Activated B cell treated with CpG ODN at 0.5 μM for 24 hours (primary cell): ENCODE measurements at regions of chr4 and their contacts with region 1.

Region 1: DNA sequence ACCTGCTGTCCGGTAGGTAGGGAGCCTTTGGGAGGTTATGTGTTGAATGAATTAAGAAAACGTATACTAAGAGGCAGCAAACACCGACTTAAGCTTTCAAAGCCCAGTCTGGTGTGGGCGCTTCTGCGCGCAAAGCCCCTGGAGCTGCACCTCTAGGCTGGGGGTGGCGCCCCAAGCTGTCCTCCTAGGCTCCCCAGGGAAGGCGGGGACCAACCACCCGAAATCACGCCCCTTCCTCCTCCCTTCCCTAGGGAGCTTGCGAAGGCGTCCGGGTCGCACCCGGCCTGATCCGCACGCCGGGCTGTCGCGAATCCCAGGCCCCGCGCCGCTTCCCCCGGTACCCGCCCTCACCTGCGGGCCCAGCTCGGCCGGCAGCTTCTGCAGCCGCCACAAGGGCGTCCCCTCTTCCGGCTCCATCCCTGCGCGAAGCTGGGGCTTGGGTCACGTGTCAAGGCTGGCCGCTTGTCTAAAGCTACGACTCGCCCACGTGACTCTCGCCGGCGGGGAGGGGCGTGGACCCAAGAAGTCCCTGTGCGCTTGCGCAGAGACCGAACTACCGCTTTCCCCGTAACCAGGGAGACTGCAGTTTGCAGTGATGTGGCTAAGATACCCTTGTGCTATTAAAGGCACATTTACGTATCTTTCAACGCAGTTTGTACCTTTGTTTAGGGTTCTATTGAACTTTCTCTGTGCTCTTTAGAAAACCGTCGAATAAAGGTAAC is at the start of gene COMMD8:
- DNase-seq: peak; percentile 94
- ATAC-seq: peak; percentile 79
- H3K4me3 Mint-ChIP-seq: peak within 1 kb of the TSS; percentile 90
- H3K27ac Mint-ChIP-seq: peak within 1 kb of the TSS; percentile 92
- H3K4me1 Mint-ChIP-seq: peaks cover 57% of the 10 kb centered on the region
- H3K27me3 Mint-ChIP-seq: no peaks in the 10 kb centered on the region
- CTCF ChIP-seq: no peak
- total RNA-seq, gene COMMD8: 23.6 and 23.9 TPM in 2 replicates

Region 2: DNA sequence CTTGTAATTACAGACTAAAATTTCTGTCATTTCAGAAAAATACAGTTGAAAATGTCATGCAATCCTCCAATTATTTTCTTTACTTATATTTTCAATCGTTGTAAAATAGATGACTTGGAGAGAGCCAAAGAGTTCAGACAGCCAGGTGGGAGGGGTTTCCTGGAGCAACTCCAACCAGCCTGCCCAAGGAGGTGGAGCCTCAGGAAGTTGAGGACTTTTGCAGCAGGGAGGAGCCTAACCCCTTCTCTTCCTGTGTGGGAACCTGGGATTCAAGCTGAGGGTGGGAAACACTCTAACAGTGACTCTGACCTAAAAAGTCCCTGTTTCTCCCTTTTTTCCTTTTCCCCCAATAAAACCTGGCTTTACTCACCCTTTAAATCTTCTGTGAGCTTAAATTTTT is 1267.3 kb before region 1 on chr4:
- CTCF ChIA-PET with region 1: no interaction called
- POLR2A ChIA-PET with region 1: no interaction called
- intact Hi-C with region 1: no loop called
- DNase-seq: no peak
- ATAC-seq: no peak
- H3K4me3 Mint-ChIP-seq: no peak overlapping the region
- H3K27ac Mint-ChIP-seq: no peak overlapping the region
- H3K4me1 Mint-ChIP-seq: no peaks in the 10 kb centered on the region
- H3K27me3 Mint-ChIP-seq: no peaks in the 10 kb centered on the region
- CTCF ChIP-seq: no peak

Region 3: DNA sequence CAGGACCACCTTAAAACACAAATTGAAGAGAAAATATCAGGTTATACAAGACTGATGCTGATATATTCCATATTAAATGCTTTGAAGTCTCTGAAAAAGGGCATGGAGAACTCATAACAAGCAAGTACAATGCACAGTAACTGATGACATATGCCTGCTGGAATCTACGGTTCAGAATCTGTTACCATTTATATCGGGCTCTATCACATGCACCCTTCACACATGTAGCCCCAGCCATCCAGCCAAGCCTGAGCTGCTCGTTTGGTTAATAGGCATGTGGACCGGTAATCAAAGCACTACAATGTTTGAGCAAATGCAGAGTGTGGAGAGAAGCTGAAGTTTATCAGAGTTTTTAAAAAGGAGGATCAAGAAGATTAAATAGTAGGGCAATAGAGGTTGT is 11.7 kb before region 1 on chr4:
- CTCF ChIA-PET with region 1: no interaction called
- POLR2A ChIA-PET with region 1: no interaction called
- intact Hi-C with region 1: no loop called
- DNase-seq: no peak
- ATAC-seq: no peak
- H3K4me3 Mint-ChIP-seq: no peak overlapping the region
- H3K27ac Mint-ChIP-seq: no peak overlapping the region
- H3K4me1 Mint-ChIP-seq: no peaks in the 10 kb centered on the region
- H3K27me3 Mint-ChIP-seq: no peaks in the 10 kb centered on the region
- CTCF ChIP-seq: no peak

Region 4: GRCh38 chr4:47485047-47485692 is 21.8 kb after region 1 on chr4 and contains the start of gene ATP10D:
- CTCF ChIA-PET with region 1: interaction called, 32 read pairs
- POLR2A ChIA-PET with region 1: interaction called, 71 read pairs
- intact Hi-C with region 1: loop called (anchors 1 kb)
- DNase-seq: peak; percentile 82
- ATAC-seq: peak; percentile 96
- H3K4me3 Mint-ChIP-seq: peak within 1 kb of the TSS; percentile 99
- H3K27ac Mint-ChIP-seq: peak within 1 kb of the TSS; percentile 99
- H3K4me1 Mint-ChIP-seq: peaks cover 64% of the 10 kb centered on the region
- H3K27me3 Mint-ChIP-seq: no peaks in the 10 kb centered on the region
- CTCF ChIP-seq: no peak
- total RNA-seq, gene ATP10D: 26.2 and 31.6 TPM in 2 replicates

Region 5: DNA sequence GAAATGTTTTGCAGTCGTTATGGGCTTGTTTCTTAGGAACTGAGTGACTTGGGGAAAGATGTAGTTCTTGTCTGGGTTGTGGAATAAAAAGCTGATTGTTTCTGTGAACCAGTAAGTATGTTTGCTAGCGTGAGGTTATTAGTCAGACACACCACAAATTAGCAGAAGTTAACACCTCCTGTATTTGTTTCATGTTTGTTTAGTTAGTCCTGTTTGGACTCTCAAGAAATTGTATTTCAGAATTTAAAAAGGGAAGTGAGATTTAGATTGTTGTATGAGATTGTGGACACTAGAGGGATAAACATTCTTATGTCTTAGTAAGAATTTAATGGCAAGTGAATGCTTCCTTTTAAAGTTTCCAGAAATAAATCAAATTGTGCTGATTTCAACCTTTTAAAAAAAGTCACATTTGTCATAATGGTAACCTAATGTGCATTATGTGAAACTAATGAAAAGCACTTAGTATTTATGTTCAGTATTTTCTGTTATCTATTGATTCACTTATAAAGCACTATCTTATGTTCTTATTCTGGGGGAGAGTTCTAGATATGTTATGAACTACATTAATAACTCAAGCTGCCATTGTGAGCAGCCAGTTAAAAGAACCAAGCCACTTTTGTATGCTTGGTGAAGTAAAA is 47.2 kb after region 1 on chr4:
- CTCF ChIA-PET with region 1: interaction called, 6 read pairs
- POLR2A ChIA-PET with region 1: interaction called, 4 read pairs
- intact Hi-C with region 1: loop called (anchors 1 kb)
- DNase-seq: no peak
- ATAC-seq: peak; percentile 90
- H3K4me3 Mint-ChIP-seq: peak overlapping the region; percentile 21
- H3K27ac Mint-ChIP-seq: peak overlapping the region; percentile 76
- H3K4me1 Mint-ChIP-seq: peaks cover 70% of the 10 kb centered on the region
- H3K27me3 Mint-ChIP-seq: no peaks in the 10 kb centered on the region
- CTCF ChIP-seq: no peak

Region 6: GRCh38 chr4:47836641-47837093 is 373.3 kb after region 1 on chr4:
- CTCF ChIA-PET with region 1: no interaction called
- POLR2A ChIA-PET with region 1: no interaction called
- intact Hi-C with region 1: loop called (anchors 5 kb)
- DNase-seq: peak; percentile 23
- ATAC-seq: peak; percentile 45
- H3K4me3 Mint-ChIP-seq: peak overlapping the region; percentile 86
- H3K27ac Mint-ChIP-seq: no peak overlapping the region
- H3K4me1 Mint-ChIP-seq: peaks cover 37% of the 10 kb centered on the region
- H3K27me3 Mint-ChIP-seq: peaks cover 31% of the 10 kb centered on the region
- CTCF ChIP-seq: no peak

Region 7: GRCh38 chr4:48016141-48017103 is 553.0 kb after region 1 on chr4 and contains the starts of genes CNGA1 and NIPAL1:
- CTCF ChIA-PET with region 1: no interaction called
- POLR2A ChIA-PET with region 1: no interaction called
- intact Hi-C with region 1: loop called (anchors 5 kb)
- DNase-seq: peak; percentile 70
- ATAC-seq: peak; percentile 92
- H3K4me3 Mint-ChIP-seq: peak within 1 kb of the TSS; percentile 83
- H3K27ac Mint-ChIP-seq: no peak within 1 kb of the TSS
- H3K4me1 Mint-ChIP-seq: peaks cover 13% of the 10 kb centered on the region
- H3K27me3 Mint-ChIP-seq: peaks cover 40% of the 10 kb centered on the region
- CTCF ChIP-seq: no peak
- total RNA-seq, gene CNGA1: not detected in 2 replicates
- total RNA-seq, gene NIPAL1: 0.69 and 0.73 TPM in 2 replicates

Region 8: GRCh38 chr4:48830706-48831531 is 1367.5 kb after region 1 on chr4 and contains the start of gene OCIAD1:
- CTCF ChIA-PET with region 1: no interaction called
- POLR2A ChIA-PET with region 1: no interaction called
- intact Hi-C with region 1: loop called (anchors 2 kb)
- DNase-seq: peak; percentile 82
- ATAC-seq: peak; percentile 94
- H3K4me3 Mint-ChIP-seq: peak within 1 kb of the TSS; percentile 100
- H3K27ac Mint-ChIP-seq: peak within 1 kb of the TSS; percentile 100
- H3K4me1 Mint-ChIP-seq: peaks cover 28% of the 10 kb centered on the region
- H3K27me3 Mint-ChIP-seq: no peaks in the 10 kb centered on the region
- CTCF ChIP-seq: no peak
- total RNA-seq, gene OCIAD1: 100 and 104 TPM in 2 replicates